ENCODE measurements at regions of chr10 and their contacts with region 1.

Region 1: DNA sequence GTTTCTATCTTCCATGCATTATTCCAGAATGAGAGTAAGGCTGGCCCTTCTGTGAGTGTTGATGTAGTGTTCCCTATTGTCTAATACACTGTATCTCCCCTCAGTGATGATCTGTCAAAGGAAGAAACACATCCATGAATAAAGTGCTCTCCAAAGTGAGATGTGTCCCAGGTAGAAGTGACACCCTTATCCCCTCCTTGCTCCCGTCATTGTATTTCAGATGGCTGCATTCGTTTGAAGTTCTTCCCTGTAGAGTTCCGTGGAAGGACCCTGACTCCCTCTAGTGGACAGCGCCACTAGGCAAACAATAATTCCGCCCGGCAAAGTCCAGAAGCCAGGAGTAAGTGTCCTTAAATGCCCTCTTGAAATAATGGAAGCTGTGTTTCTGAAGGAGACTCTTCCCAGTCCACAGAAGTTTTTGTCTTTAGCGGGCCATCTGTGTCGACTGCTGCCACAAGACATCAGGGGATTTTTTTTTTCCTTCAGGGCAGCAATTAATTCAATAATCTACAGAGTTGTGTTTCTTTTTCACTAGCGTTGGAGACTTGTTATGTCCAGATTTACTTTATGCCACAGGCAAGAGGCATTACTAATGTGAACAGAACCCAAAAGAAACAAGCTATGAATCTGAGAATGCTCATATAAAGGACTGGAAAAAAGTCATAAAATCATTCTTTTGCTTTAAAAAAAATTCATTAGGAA is 64.6 kb downstream of the THNSL1 start:
- DNase-seq: peak; percentile 89
- H3K4me3 Mint-ChIP-seq: no peak overlapping the region
- H3K27ac Mint-ChIP-seq: no peak overlapping the region
- H3K4me1 Mint-ChIP-seq: peaks cover 11% of the 10 kb centered on the region
- H3K27me3 Mint-ChIP-seq: peaks cover 18% of the 10 kb centered on the region

Region 2: GRCh38 chr10:24617771-24618391 is 463.1 kb before region 1 on chr10:
- intact Hi-C with region 1: loop called (anchors 5 kb)
- DNase-seq: peak; percentile 83
- H3K4me3 Mint-ChIP-seq: no peak overlapping the region
- H3K27ac Mint-ChIP-seq: peak overlapping the region; percentile 72
- H3K4me1 Mint-ChIP-seq: peaks cover 22% of the 10 kb centered on the region
- H3K27me3 Mint-ChIP-seq: no peaks in the 10 kb centered on the region

Region 3: DNA sequence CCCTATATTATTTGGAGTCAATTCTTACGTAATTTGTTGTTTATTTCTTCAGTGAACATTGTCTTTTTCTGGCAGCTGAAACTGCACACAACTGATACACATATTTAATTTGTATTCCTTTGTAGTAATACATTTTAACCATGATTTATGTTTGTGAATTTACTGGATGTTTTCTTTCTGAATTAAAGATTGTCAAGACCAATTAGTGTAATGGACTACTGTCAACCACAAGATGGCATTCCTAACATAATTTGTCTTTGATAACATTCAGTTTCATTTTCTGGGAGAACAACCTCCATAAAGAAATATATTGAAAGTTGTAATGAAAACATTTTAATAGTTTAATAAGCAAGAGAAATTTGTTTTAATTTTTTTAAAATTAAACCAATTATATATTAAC is 54.6 kb before region 1 on chr10:
- intact Hi-C with region 1: no loop called
- DNase-seq: no peak
- H3K4me3 Mint-ChIP-seq: no peak overlapping the region
- H3K27ac Mint-ChIP-seq: no peak overlapping the region
- H3K4me1 Mint-ChIP-seq: peaks cover 2% of the 10 kb centered on the region
- H3K27me3 Mint-ChIP-seq: peaks cover 3% of the 10 kb centered on the region

Region 4: GRCh38 chr10:25101461-25102146 is 20.6 kb after region 1 on chr10:
- intact Hi-C with region 1: no loop called
- DNase-seq: no peak
- H3K4me3 Mint-ChIP-seq: no peak overlapping the region
- H3K27ac Mint-ChIP-seq: no peak overlapping the region
- H3K4me1 Mint-ChIP-seq: no peaks in the 10 kb centered on the region
- H3K27me3 Mint-ChIP-seq: no peaks in the 10 kb centered on the region

Region 5: DNA sequence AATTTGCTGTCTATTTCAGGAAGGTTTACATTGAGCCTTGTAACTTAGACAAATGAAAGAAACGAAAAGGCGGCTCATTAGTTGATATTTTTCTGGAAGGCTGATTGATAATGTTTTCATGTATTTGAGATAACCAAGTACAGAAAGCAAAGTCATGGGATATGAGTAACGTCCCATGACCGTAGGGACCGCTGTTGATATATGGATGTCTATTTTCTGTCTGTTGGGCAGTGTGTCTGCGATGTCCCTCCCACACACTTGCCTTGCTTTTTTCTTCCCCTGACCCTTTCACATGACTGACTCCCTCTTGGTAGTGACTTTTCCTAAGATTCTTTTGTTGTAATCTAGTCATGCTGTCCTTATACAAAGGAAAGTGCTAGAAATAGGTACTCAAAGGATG is 36.7 kb after region 1 on chr10:
- intact Hi-C with region 1: no loop called
- DNase-seq: no peak
- H3K4me3 Mint-ChIP-seq: no peak overlapping the region
- H3K27ac Mint-ChIP-seq: no peak overlapping the region
- H3K4me1 Mint-ChIP-seq: no peaks in the 10 kb centered on the region
- H3K27me3 Mint-ChIP-seq: peaks cover 7% of the 10 kb centered on the region

Region 6: GRCh38 chr10:25766687-25767221 is 685.7 kb after region 1 on chr10:
- intact Hi-C with region 1: no loop called
- DNase-seq: no peak
- H3K4me3 Mint-ChIP-seq: no peak overlapping the region
- H3K27ac Mint-ChIP-seq: no peak overlapping the region
- H3K4me1 Mint-ChIP-seq: no peaks in the 10 kb centered on the region
- H3K27me3 Mint-ChIP-seq: peaks cover 7% of the 10 kb centered on the region